Calu3 (cell line): ENCODE measurements at regions of chr1 and their contacts with region 1.

Region 1: DNA sequence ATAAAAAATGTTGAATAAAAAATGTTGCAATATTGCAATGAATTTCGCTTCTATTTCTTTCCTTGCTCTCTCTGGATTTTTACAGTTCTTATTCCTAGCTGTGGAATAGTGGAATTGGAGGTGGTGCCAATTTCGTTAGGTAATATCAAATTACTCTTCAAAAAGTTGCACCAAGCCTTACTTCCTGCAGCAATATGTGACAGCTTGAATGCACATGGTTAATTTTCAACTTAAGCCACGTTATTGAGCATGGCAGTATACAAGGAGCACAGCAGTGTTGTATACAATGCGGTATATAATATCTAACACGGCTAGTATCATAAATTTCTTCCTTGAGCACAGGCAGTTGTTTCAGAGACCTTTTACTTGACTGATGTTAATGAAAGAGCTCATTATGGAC is 152.5 kb downstream of the NOS1AP start:
- DNase-seq: no peak
- H3K4me3 Mint-ChIP-seq: peak overlapping the region; percentile 1
- H3K27ac Mint-ChIP-seq: no peak overlapping the region
- H3K4me1 Mint-ChIP-seq: peaks cover 58% of the 10 kb centered on the region
- H3K27me3 Mint-ChIP-seq: no peaks in the 10 kb centered on the region
- CTCF ChIP-seq: no peak

Region 2: DNA sequence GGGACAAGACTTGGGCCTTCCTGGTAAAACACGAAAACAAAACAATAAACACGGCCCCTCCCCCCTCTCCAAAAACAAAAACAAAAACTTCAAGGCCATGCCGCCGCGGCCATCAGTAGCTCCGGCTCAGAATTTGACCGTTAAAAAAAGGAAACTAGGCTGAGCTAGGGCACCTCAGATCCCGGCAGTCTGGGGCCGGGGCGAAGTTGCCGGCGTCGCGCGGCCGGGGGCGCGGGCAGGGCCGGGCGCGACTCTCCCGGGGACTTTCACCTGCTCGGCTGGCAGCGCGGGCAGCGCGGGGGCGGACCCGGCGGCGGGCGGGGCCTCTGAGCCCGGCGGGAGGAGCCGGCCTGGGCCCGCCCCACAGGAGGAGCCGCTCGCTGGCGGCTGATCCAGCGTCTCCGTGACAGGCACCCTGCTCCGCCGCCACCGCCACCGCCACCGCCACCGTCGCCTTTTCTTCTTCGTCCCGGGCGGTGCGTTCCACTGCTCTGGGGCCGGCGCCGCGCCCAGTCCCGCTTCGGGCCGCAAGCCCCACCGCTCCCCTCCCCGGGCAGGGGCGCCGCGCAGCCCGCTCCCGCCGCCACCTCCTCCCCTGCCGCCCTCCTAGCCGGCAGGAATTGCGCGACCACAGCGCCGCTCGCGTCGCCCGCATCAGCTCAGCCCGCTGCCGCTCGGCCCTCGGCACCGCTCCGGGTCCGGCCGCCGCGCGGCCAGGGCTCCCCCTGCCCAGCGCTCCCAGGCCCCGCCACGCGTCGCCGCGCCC is 152.5 kb before region 1 on chr1 and contains the start of gene NOS1AP:
- CTCF ChIA-PET with region 1: no interaction called
- intact Hi-C with region 1: loop called (anchors 5 kb)
- DNase-seq: peak; percentile 93
- H3K4me3 Mint-ChIP-seq: peak within 1 kb of the TSS; percentile 86
- H3K27ac Mint-ChIP-seq: no peak within 1 kb of the TSS
- H3K4me1 Mint-ChIP-seq: peaks cover 26% of the 10 kb centered on the region
- H3K27me3 Mint-ChIP-seq: no peaks in the 10 kb centered on the region
- CTCF ChIP-seq: no peak
- total RNA-seq, gene NOS1AP: 6.7 and 9.9 TPM in 2 replicates

Region 3: GRCh38 chr1:162206749-162207635 is 15.0 kb before region 1 on chr1:
- CTCF ChIA-PET with region 1: interaction called, 11 read pairs
- intact Hi-C with region 1: no loop called
- DNase-seq: peak; percentile 74
- H3K4me3 Mint-ChIP-seq: peak overlapping the region; percentile 53
- H3K27ac Mint-ChIP-seq: peak overlapping the region; percentile 26
- H3K4me1 Mint-ChIP-seq: peaks cover 38% of the 10 kb centered on the region
- H3K27me3 Mint-ChIP-seq: peaks cover 17% of the 10 kb centered on the region
- CTCF ChIP-seq: no peak

Region 4: DNA sequence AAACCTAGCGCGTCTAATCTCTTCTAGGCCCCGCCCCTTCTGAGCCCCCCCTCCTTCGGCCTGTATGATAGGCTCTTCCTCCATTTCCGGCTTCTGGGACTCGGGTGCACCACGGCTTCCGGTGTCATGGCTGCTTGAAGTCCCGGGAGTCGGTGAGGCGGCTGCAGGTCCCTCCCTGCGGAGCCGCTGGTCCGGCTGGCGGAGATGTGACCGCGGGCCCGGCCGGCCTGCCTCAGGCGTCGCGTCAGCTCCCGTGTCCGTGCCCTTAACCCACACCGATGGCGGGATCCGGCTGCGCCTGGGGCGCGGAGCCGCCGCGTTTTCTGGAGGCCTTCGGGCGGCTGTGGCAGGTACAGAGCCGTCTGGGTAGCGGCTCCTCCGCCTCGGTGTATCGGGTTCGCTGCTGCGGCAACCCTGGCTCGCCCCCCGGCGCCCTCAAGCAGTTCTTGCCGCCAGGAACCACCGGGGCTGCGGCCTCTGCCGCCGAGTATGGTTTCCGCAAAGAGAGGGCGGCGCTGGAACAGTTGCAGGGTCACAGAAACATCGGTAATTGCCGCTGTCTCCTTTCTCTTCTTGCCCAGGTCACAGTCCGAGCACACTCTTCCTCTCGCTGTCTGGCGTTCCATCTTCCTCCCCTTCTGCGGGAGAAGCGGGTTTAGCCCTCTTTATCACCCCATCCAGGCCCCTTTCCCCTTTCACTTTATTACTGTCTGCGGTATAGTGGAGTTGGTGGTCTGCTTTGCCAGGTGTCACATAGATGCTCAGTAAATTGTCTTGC is 275.9 kb after region 1 on chr1 and contains the start of gene UHMK1:
- CTCF ChIA-PET with region 1: no interaction called
- intact Hi-C with region 1: no loop called
- DNase-seq: peak; percentile 91
- H3K4me3 Mint-ChIP-seq: peak within 1 kb of the TSS; percentile 84
- H3K27ac Mint-ChIP-seq: peak within 1 kb of the TSS; percentile 63
- H3K4me1 Mint-ChIP-seq: peaks cover 10% of the 10 kb centered on the region
- H3K27me3 Mint-ChIP-seq: peaks cover 8% of the 10 kb centered on the region
- CTCF ChIP-seq: no peak
- total RNA-seq, gene UHMK1: 87.8 and 98.1 TPM in 2 replicates